HEK293 (cell line): ENCODE measurements at regions of chr10 and their contacts with region 1.

Region 1: DNA sequence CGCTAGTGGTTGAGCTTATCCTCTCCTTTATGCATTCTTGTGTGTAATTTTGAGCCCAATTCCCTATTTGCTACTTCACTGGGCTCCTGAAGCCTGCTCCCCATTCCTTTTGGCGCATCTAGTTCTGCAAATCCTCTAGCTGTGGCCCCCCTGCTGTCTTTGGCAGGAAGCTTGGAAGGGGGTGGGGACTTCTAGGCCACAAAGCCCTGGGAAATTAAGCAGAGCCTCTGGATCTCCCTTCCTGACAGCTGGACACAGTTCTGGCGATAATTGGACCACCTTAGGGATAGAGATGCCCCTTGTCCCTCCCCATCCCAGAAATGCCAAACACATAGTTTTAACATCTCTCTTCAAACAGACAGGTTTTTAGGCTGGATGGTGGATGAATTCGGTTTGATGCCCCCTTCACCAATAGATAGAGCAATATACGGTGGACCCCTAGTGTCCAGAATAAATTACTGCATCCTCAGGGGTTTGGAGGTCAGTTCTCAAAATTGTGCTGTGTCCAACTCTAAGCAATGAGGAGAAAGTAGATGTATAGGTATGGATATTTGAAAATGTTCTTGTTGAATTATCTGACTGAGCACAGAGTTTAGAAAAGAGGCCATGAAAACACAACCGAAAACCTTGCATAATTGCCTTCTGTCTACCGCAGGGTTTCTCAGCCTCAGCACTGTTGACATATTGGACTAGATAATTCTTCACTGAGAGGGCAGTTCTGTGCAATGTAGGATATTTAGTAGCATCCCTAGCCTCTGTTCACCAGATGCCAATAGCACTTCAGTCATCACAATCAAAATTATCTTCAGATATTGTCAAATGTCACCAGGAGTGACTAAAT is 75.5 kb downstream of the PAPSS2 start:
- H3K4me3 ChIP-seq: no peak overlapping the region
- H3K27ac ChIP-seq: no peak overlapping the region
- H3K4me1 ChIP-seq: peaks cover 5% of the 10 kb centered on the region; the same call in 1 of the 2 replicates
- CTCF ChIP-seq: peak; percentile 49; the same call in 1 of the 2 replicates

Region 2: GRCh38 chr10:87531908-87532622 is 203.1 kb before region 1 on chr10:
- CTCF ChIA-PET with region 1: interaction called, 11 read pairs
- POLR2A ChIA-PET with region 1: no interaction called
- H3K4me3 ChIP-seq: no peak overlapping the region
- H3K27ac ChIP-seq: no peak overlapping the region
- H3K4me1 ChIP-seq: 0 out of 2 replicates have a peak, but pooled peaks cover 4% of the 10 kb centered on the region
- CTCF ChIP-seq: no peak

Region 3: DNA sequence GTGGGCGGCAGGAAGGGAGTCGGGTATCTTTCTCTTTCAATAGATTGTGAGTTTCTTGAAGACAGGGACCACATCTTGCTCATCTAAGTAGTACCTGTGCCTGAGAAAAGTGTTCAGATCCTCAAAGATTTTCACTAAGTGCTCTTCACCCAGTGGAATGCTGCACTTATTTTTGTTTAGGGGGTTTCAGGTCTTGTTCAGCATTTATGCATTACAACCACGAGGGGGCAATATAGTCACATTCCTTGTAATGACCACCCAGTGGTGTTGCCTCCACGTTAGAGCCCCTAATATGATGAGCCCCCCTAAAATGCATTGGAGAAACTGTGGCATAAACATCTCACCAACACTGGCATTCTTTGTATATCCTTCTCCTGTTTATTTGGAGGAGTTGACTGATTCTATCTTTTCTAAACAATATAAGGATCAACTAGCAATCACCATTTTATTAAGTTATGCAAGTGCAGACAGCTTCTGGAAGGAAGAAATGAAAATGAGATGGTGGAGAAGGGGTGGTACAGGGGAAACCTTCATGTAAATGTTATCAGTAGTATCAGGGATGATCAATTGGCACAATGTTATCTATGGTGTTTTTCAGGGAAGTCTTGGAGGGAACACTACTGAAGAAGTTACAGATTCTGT is 78.7 kb before region 1 on chr10:
- CTCF ChIA-PET with region 1: interaction called, 20 read pairs
- POLR2A ChIA-PET with region 1: no interaction called
- H3K4me3 ChIP-seq: no peak overlapping the region
- H3K27ac ChIP-seq: no peak overlapping the region
- H3K4me1 ChIP-seq: peaks cover 17% of the 10 kb centered on the region
- CTCF ChIP-seq: peak; percentile 69; the same call in 1 of the 2 replicates

Region 4: GRCh38 chr10:87675396-87676376 is 59.5 kb before region 1 on chr10:
- CTCF ChIA-PET with region 1: no interaction called
- POLR2A ChIA-PET with region 1: no interaction called
- H3K4me3 ChIP-seq: no peak overlapping the region
- H3K27ac ChIP-seq: no peak overlapping the region
- H3K4me1 ChIP-seq: peaks cover 15% of the 10 kb centered on the region
- CTCF ChIP-seq: no peak

Region 5: DNA sequence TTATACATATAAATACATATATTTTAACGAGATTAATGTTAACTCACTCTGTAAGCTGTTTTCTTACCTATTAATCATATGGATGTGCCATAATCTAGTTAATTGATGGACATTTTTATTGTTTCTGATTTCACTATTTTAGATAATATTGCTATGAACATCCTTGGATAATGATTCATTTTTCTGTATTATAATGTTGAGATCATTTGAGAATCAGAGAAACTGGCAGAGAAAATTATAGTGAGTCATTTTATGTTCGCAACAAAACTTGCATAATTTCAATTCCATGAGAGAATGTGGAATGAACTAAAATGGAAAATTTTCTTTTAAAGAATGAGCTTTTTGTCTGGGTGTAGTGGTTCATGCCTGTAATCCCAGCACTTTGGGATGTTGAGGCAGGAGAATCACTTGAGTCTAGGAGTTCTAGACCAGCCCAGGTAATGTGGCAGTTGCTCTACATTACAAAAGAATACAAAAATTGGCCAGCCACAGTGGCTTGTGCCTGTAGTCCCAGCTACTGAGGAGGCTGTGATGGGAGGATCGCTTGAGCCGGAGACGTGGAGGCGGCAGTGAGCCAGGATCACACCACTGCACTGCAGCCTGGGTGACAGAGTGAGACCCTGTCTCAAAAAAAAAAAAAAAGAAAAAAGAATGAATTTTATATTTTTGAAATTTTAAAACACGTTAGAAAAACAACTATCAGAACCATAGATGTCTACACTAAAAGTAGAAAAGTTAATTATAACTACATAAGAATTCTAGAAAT is 35.0 kb before region 1 on chr10:
- CTCF ChIA-PET with region 1: interaction called, 12 read pairs
- POLR2A ChIA-PET with region 1: no interaction called
- H3K4me3 ChIP-seq: no peak overlapping the region
- H3K27ac ChIP-seq: no peak overlapping the region
- H3K4me1 ChIP-seq: peaks cover 13% of the 10 kb centered on the region
- CTCF ChIP-seq: no peak

Region 6: GRCh38 chr10:87721781-87722180 is 13.4 kb before region 1 on chr10:
- CTCF ChIA-PET with region 1: interaction called, 10 read pairs
- POLR2A ChIA-PET with region 1: no interaction called
- H3K4me3 ChIP-seq: no peak overlapping the region
- H3K27ac ChIP-seq: no peak overlapping the region
- H3K4me1 ChIP-seq: no peaks in the 10 kb centered on the region; the same call in 1 of the 2 replicates
- CTCF ChIP-seq: no peak

Region 7: DNA sequence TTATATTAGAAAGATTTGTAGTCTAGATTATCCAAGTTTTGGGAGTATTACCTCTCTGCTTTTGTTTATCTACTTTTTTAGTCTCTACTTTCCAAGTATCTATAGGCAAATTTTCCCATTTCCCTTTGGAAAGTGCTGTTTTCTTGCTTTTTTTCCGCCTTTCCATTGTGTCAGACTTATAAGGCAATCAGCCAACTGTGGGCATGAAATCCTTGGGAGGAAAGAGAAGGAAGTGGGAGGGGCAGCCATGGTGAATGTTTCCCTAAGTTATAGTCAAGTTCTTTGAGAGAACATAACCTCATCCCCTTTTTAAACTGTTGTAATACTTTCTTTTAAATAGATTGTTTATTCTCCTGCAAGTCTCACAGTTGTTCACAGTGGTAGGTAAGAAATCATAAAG is 180.8 kb after region 1 on chr10:
- CTCF ChIA-PET with region 1: no interaction called
- POLR2A ChIA-PET with region 1: no interaction called
- H3K4me3 ChIP-seq: no peak overlapping the region
- H3K27ac ChIP-seq: no peak overlapping the region
- H3K4me1 ChIP-seq: 0 out of 2 replicates have a peak, but pooled peaks cover 2% of the 10 kb centered on the region
- CTCF ChIP-seq: no peak